Activated naive CD4-positive, alpha-beta T cell treated with anti-CD3 and anti-CD28 coated beads for 36 hours (primary cell): ENCODE measurements at regions of chr5 and their contacts with region 1.

Region 1: DNA sequence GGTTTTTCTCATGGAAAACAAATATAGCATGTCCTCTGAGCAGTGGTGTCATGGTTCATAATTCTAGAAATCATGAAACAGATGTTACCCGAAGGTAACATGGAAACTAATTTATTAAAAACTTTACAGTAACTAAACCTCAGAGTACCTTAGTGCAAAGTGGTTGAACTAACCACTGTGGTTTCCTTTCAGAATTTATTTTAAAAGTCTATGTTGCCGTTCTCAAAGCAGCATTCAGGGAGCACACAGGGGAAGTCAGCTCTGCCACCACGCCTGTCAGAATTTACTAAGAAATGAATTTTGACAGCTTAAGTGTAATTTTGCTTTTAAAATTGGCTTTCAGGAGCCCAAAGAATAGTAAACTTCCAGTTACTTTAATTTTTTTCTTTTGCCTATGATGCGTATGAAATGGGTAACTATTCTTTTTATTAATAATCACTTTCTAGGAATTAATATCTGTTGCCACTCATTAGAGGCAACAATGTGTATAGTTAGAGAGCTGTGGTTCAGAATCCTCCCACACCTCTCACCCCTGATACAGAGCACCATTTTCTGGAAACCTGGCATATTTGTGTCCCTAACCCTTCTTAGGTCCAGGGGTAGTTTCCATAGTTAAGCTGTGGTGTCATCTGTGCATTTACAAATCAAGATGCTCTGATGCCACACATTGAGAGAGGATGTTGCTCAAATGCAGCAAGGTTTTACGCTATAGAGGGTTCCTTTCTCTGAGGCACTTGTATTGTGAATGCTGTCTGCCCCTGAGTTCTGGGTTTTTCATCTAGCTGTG is 202.6 kb downstream of the ZSWIM6 start:
- DNase-seq: peak; percentile 18
- H3K4me3 Mint-ChIP-seq: no peak overlapping the region
- H3K27ac Mint-ChIP-seq: no peak overlapping the region
- H3K4me1 Mint-ChIP-seq: peaks cover 17% of the 10 kb centered on the region
- H3K27me3 Mint-ChIP-seq: no peaks in the 10 kb centered on the region

Region 2: GRCh38 chr5:61366497-61367240 is 168.0 kb before region 1 on chr5:
- CTCF ChIA-PET with region 1: no interaction called
- intact Hi-C with region 1: no loop called
- DNase-seq: no peak
- H3K4me3 Mint-ChIP-seq: no peak overlapping the region
- H3K27ac Mint-ChIP-seq: no peak overlapping the region
- H3K4me1 Mint-ChIP-seq: peaks cover 3% of the 10 kb centered on the region
- H3K27me3 Mint-ChIP-seq: no peaks in the 10 kb centered on the region

Region 3: GRCh38 chr5:61578858-61579503 is 44.3 kb after region 1 on chr5:
- CTCF ChIA-PET with region 1: no interaction called
- intact Hi-C with region 1: loop called (anchors 1 kb)
- DNase-seq: no peak
- H3K4me3 Mint-ChIP-seq: no peak overlapping the region
- H3K27ac Mint-ChIP-seq: no peak overlapping the region
- H3K4me1 Mint-ChIP-seq: no peaks in the 10 kb centered on the region
- H3K27me3 Mint-ChIP-seq: peaks cover 3% of the 10 kb centered on the region